ENCODE measurements at regions of chr6 and their contacts with region 1.

Region 1: DNA sequence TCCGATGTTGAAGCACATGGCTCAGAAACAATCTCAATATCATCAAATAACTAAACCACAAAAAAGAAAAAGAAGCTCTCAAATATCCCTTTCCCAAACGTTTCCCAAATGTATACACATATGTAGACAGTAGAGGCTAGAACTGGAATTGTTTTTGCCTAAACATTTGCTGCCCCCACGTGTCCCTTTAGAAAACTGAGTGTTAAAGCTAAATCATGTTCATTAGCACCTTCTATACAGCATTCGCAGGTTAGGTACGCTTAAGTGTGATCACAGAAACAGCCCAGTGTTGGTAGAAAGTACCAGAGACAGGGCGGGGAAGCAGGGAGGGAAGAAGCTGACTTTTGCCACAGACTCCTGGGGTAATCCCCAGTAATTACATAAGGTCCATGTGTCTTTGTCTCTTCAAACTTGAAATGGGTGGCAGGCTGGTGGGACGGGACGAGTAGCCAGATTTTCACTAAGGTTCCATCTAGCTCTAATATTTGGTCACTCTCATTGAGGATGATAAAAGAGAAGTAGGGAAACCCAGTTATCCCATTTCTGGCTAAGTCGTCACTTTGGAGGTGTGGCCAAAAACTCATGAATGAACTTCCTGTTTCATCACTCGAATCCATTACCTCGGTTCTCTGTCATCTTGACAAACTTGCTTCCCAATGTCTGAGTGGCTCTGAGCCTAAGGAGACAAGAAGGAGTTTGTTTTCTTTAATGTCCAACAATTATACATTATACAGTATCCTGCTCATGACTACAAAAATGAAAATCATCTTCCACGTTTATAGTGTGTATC is 15.0 kb upstream of the TFAP2A start:
- DNase-seq: no peak

Region 2: GRCh38 chr6:9540534-9541126 is 889.2 kb before region 1 on chr6:
- intact Hi-C with region 1: loop called (anchors 10 kb)
- DNase-seq: no peak

Measured in cardiac septum (tissue), 1 donor.